Naive thymus-derived CD8-positive, alpha-beta T cell (primary cell): ENCODE measurements at regions of chr9 and their contacts with region 1.

Region 1: DNA sequence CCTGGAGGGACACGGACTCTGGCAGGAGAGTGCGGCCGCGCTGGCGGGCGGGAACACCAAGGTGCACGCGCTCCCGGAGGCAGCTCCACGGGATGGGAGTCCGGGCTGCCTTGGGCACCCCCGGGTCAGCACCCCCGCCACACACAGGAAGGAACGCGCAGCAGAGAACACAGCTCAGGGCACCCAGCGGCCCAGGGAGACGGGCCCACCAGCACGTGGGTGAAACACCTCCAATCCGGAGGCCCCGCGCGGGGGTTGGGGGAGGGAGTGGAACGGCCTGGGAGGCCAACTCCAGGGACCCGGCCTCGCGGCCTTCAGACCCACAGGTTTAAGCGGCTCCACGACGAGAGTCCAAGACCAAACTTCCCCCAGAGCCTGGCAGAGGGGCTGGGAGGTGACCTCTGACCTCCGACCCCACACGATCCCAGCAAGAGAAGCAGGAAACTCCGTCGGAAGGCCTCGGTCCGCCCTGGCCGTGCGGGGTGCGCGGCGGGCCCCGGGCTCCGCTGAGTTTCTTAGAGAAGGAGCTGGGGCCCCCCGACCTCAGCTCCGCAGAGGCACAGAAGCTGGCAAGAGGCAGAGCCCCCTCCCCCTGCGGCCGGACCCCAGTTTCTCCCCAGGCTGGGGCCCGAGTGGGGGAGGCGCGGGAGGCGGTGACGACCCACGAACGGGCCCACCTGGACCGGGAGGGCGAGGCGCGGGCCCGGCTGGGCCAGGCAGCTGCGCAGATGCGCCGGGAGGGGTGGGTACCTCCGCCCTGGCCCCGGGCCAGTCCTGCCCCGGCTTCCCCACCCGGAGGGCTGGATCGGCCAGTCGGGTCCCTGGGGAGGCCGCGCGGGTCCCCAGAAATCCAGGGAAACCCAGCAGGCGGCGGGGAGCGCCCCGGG is 851 bp downstream of the NACC2 start:
- DNase-seq: peak in 9 of 10 donors; percentile 32 to 80 (median 52)
- ATAC-seq: peak; percentile 81 to 82
- H3K4me3 Mint-ChIP-seq: peak overlapping the region; percentile 56 to 86 (median 78)
- H3K27ac Mint-ChIP-seq: peak overlapping the region in 7 of 10 donors; percentile 15 to 85 (median 56)
- H3K4me1 Mint-ChIP-seq: peaks cover 14 to 39% (median 30%) of the 10 kb centered on the region in 4 donors
- H3K27me3 Mint-ChIP-seq: peaks cover 0 to 10% (median 1%) of the 10 kb centered on the region in 5 donors

Region 2: GRCh38 chr9:136109351-136110081 is 15.3 kb after region 1 on chr9:
- POLR2A ChIA-PET with region 1: interaction called, 78 read pairs
- DNase-seq: peak; percentile 85 to 94 (median 88)
- ATAC-seq: peak; percentile 86 to 90
- H3K4me3 Mint-ChIP-seq: peak overlapping the region; percentile 77 to 92 (median 87)
- H3K27ac Mint-ChIP-seq: peak overlapping the region; percentile 76 to 96 (median 90)
- H3K4me1 Mint-ChIP-seq: peaks cover 31 to 89% (median 77%) of the 10 kb centered on the region in 4 donors
- H3K27me3 Mint-ChIP-seq: no peaks in the 10 kb centered on the region

Region 3: DNA sequence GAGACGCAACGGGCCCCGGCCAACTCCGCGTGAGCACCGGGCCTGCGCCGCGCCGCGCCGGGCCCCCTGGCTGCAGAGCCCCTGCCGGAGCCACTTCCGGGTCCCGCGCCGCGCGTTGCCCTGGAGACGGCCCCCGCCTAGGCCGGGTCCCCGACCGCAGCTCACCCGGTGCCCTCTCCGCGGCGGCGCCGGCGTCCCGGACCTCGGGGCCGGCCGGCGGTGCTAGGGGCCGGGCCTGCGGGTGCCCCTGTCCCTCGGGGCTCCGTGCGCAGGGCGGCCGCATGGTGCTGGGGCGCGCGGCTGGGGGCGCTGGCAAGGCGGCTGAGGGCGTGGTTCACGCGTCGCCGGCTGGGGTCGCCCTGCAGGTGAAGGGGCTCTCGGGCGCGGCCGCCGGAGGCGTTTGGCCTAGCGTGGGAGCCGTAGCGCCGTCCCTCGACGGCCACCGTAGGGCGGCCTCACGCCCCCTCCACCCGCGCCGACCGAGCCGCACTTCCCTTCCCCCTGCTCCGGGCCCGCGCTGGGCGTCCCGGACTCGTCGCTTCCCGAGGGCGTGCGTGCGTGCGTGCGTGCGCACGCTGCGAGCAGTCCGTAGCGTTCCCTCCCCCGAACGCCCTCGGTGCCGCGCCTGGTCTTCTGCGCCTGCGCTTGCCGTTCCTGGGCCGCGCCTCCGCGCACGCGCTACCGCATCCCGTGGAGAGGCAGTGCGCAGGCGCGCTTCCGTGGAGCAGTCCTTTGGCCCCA is 24.3 kb after region 1 on chr9 and contains the start of gene TMEM250:
- POLR2A ChIA-PET with region 1: interaction called, 55 read pairs
- DNase-seq: peak; percentile 92 to 98 (median 96)
- ATAC-seq: peak; percentile 88 to 91
- H3K4me3 Mint-ChIP-seq: peak within 1 kb of the TSS; percentile 71 to 88 (median 82)
- H3K27ac Mint-ChIP-seq: peak within 1 kb of the TSS in 9 of 10 donors; percentile 25 to 95 (median 90)
- H3K4me1 Mint-ChIP-seq: peaks cover 3 to 36% (median 21%) of the 10 kb centered on the region in 4 donors
- H3K27me3 Mint-ChIP-seq: no peaks in the 10 kb centered on the region
- polyA plus RNA-seq, gene TMEM250: 39.1 to 51.7 (median 40.3) TPM